Breast epithelium (tissue), 4 donors: ENCODE measurements at regions of chr6 and their contacts with region 1.

Region 1: GRCh38 chr6:23365732-23366131 is 760.3 kb upstream of the NRSN1 start:
- DNase-seq: no peak
- H3K4me3 ChIP-seq: no peak overlapping the region
- H3K27ac ChIP-seq: no peak overlapping the region
- H3K4me1 ChIP-seq: no peaks in the 10 kb centered on the region
- H3K27me3 ChIP-seq: no peaks in the 10 kb centered on the region
- CTCF ChIP-seq: no peak
- POLR2A ChIP-seq: no peak

Region 2: DNA sequence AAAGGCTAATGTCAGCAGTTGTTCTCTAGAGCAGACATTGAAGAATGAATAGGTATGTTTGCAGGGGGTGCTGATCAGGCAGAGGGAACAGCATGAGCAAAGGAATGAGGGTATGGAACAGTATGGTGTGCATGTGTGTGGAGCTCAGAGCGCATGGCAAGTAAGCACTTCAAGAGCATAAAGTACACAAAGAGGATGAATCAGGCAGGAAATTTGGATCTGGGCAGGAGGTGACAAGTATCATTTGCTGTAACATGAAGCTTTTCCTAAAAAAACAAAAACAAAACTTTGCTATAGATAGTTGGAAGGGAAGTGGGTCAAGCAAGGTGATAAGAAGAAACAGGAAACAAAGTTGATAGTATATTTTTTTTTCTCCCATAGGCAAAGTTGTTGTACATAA is 49.6 kb before region 1 on chr6:
- intact Hi-C with region 1: loop called (anchors 2 kb)
- DNase-seq: no peak
- H3K4me3 ChIP-seq: no peak overlapping the region
- H3K27ac ChIP-seq: no peak overlapping the region
- H3K4me1 ChIP-seq: no peaks in the 10 kb centered on the region
- H3K27me3 ChIP-seq: no peaks in the 10 kb centered on the region
- CTCF ChIP-seq: no peak
- POLR2A ChIP-seq: no peak

Region 3: DNA sequence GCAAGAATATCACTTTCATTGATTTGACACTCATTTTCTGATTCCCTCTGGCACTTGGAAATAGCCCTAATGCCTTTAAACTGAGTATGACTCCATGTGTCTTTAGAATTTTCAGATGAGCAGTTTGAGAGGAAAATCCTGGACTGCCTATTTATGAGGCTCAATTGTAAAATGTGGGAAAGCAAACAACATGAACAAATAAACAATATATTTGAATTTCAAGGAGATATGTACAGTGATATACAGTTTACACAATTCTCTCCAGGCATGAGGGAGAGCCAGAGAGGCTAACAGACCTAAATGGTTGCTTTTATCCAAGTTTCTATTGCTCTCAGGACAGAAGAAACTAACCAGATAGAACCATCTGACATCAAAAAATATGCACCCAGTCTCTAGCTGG is 12.1 kb after region 1 on chr6:
- intact Hi-C with region 1: no loop called
- DNase-seq: no peak
- H3K4me3 ChIP-seq: no peak overlapping the region
- H3K27ac ChIP-seq: no peak overlapping the region
- H3K4me1 ChIP-seq: no peaks in the 10 kb centered on the region
- H3K27me3 ChIP-seq: no peaks in the 10 kb centered on the region
- CTCF ChIP-seq: no peak
- POLR2A ChIP-seq: no peak